ENCODE measurements at regions of chr9 and their contacts with region 1.

Region 1: DNA sequence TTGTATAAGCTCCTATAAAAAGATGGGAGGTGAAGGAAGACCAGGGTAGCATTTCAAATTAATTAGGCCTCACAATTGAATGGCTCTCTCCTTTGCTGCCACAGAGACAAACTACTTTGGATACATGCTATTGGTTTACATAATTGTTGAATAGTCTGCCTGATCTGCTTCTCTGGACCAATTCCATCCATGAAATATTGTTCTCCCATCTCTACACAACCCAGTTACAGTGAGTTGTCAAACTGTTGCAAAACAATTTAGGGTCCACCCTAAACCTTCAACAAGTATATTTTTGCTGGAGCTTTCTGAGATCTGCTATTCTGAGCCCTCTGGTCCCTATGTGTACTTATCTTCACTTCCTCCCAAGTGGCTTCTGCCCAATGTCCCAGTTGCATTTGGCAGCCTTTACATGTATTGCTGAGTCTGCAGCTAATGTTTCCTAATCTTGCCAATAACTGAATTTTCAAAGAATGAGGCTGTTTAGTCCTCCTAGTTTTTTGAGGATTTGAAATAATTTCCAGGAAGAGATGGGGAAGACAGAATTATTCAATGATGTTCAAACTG is 38.9 kb downstream of the AGTPBP1 start:
- DNase-seq: no peak
- ATAC-seq: no peak
- H3K4me3 ChIP-seq: no peak overlapping the region
- H3K27ac ChIP-seq: no peak overlapping the region
- H3K4me1 ChIP-seq: no peaks in the 10 kb centered on the region
- H3K27me3 ChIP-seq: no peaks in the 10 kb centered on the region
- CTCF ChIP-seq: no peak

Region 2: GRCh38 chr9:84397151-84397728 is 1305.6 kb before region 1 on chr9:
- CTCF ChIA-PET with region 1: interaction called, 5 read pairs
- POLR2A ChIA-PET with region 1: no interaction called
- intact Hi-C with region 1: loop called (anchors 10 kb)
- DNase-seq: peak; percentile 78
- ATAC-seq: peak; percentile 80
- H3K4me3 ChIP-seq: no peak overlapping the region
- H3K27ac ChIP-seq: no peak overlapping the region
- H3K4me1 ChIP-seq: peaks cover 7% of the 10 kb centered on the region; the same call in 1 of the 2 replicates
- H3K27me3 ChIP-seq: no peaks in the 10 kb centered on the region
- CTCF ChIP-seq: peak; percentile 75

Region 3: GRCh38 chr9:85741875-85742629 is 39.2 kb after region 1 on chr9 and contains the start of gene AGTPBP1:
- CTCF ChIA-PET with region 1: interaction called, 3 read pairs
- POLR2A ChIA-PET with region 1: no interaction called
- intact Hi-C with region 1: loop called (anchors 2 kb)
- DNase-seq: peak; percentile 92
- ATAC-seq: peak; percentile 77
- H3K4me3 ChIP-seq: peak within 1 kb of the TSS; percentile 80
- H3K27ac ChIP-seq: peak within 1 kb of the TSS; percentile 23; the same call in 1 of the 2 replicates
- H3K4me1 ChIP-seq: peaks cover 13% of the 10 kb centered on the region; the same call in 1 of the 2 replicates
- H3K27me3 ChIP-seq: no peaks in the 10 kb centered on the region
- CTCF ChIP-seq: no peak
- total RNA-seq, gene AGTPBP1: 5.3 and 6.0 TPM in 2 replicates